Left colon (tissue), 2 donors: ENCODE measurements at regions of chr1 and their contacts with region 1.

Region 1: DNA sequence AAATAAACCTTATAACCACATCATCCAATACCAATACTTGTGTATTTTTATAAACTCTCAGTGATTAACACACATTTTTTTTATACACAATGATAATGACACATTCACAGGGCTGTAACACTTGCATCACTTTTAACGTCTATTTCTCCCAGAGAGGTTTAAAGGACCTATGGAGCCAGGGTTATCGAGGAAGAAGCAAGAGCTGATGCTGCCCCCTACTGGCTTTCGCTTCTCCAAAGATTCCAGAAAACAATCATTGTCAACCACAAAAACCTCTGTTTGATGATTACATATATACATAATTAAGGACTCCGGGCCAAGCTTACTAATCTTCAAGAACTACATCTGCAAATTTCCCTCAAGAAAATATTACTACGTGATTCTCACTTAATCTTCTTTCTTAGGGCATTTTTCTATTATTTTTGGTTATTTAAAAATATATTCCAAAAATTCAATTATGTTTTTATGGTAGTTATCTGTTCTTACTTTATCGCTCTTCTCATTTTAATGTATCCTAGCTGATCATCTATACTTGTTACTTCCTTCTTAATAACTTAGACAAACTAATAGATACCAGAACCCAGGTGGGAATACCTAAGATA is 214.5 kb downstream of the VAV3 start:
- DNase-seq: peak; percentile 47 to 85
- ATAC-seq: peak; percentile 88

Region 2: GRCh38 chr1:107277022-107277421 is 473.4 kb before region 1 on chr1:
- intact Hi-C with region 1: loop called in 1 of 2 experiments (anchors 5 kb)
- DNase-seq: peak; percentile 25 to 44
- ATAC-seq: peak; percentile 70

Region 3: DNA sequence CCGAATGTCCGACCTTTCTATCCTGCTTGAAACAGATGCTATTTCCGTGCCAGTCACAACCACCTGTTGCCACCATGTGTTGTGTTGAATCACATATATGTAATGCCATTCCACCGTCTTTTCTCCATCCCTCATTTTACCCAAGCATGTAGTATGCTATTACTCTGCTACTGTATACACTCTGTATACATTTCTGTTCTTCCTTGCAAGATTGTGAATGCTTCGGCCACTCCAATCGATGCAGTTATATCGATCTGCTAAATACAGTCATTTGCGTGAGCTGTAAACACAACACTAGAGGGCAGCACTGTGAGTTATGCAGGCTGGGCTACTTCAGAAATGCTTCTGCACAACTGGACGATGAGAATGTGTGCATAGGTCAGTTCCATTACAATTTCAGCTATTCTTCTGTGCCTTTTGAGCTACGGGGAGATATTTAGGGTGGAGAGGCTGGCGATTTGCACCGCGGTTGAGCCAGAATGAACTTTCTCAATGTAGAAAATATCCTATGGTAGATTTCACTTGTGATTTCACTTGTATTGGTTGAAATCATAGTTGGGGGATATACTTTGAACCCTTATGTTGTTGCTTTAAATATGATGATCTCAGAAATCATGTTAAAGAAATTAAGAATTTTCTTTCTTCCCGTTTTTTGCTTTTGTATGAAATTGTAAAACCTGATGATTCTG is 319.8 kb before region 1 on chr1:
- intact Hi-C with region 1: loop called in 1 of 2 experiments (anchors 5 kb)
- DNase-seq: peak; percentile 26 to 27
- ATAC-seq: peak; percentile 75

Region 4: DNA sequence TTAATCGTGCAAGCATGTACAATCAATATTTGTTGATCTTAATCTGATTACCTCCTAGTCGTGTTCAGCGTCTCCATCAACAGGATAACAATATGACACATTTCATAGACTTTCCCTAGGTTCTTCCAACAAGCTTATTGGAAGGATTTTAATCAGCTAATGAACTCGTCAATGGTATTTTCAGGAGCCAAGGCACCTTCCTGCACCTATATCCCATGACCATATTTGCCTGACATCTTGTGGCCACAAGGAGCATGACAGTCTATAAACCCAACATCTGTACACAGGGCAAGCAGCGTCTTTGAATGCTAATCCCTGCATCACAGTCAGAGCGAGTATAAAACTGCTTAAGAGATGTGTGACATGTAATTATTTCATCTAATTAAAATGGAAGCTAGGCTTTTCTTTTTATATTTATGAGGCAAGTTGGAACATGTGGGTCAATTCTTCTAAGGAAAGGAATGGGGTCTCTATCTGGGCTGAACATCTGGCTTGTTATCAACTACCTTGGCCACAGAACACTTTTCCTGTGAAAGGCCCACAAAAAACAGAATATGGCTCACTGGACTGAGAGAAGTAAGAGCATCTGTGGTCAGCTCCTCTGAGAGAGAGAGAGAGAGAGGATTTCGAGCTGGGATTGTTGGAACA is 220.8 kb before region 1 on chr1:
- intact Hi-C with region 1: loop called in 1 of 2 experiments (anchors 5 kb)
- DNase-seq: peak in 1 of 2 donors; percentile 10
- ATAC-seq: peak; percentile 91

Region 5: GRCh38 chr1:107572653-107573211 is 177.7 kb before region 1 on chr1:
- intact Hi-C with region 1: no loop called
- DNase-seq: no peak
- ATAC-seq: peak; percentile 15